Psoas muscle (tissue), 8 donors: ENCODE measurements at regions of chr19 and their contacts with region 1.

Region 1: GRCh38 chr19:55516878-55517620 is 19.9 kb downstream of the SBK2 start:
- DNase-seq: peak; percentile 94 to 97
- ATAC-seq: peak; percentile 80 to 91 (median 84)
- H3K4me3 ChIP-seq: peak overlapping the region; percentile 71
- H3K27ac ChIP-seq: peak overlapping the region; percentile 95
- H3K4me1 ChIP-seq: peaks cover 15% of the 10 kb centered on the region
- H3K27me3 ChIP-seq: no peaks in the 10 kb centered on the region
- CTCF ChIP-seq: peak; percentile 78

Region 2: GRCh38 chr19:55549500-55550320 is 32.7 kb after region 1 on chr19:
- intact Hi-C with region 1: no loop called
- DNase-seq: peak; percentile 58 to 91
- ATAC-seq: peak; percentile 41 to 64 (median 54)
- H3K4me3 ChIP-seq: peak overlapping the region; percentile 56
- H3K27ac ChIP-seq: peak overlapping the region; percentile 94
- H3K4me1 ChIP-seq: peaks cover 66% of the 10 kb centered on the region
- H3K27me3 ChIP-seq: no peaks in the 10 kb centered on the region
- CTCF ChIP-seq: peak; percentile 7

Region 3: DNA sequence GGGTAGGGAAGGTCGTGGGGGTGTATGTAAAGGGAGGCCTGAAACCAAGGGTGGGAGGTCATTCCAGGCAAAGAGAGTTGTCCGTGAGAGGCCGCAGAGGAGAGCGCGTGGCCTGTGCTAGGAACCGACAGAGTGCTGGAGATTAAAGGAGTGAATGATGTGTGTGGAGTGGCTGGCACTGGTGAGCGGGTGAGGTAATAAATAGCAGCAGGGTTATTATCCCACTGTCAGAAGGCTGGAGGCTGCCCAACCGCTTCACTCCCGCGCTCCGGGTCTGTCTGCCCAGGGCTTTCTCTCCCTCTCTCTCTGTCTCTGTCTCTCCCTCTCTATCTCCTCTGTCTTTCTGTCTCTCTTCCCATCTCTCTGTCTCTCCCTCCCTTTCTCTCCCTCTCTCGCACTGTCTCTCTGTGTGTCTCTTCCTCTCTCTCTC is 46.2 kb after region 1 on chr19:
- intact Hi-C with region 1: no loop called
- DNase-seq: peak; percentile 58 to 84
- ATAC-seq: peak; percentile 93 to 98 (median 98)
- H3K4me3 ChIP-seq: peak overlapping the region; percentile 28
- H3K27ac ChIP-seq: peak overlapping the region; percentile 83
- H3K4me1 ChIP-seq: no peaks in the 10 kb centered on the region
- H3K27me3 ChIP-seq: no peaks in the 10 kb centered on the region
- CTCF ChIP-seq: no peak

Region 4: DNA sequence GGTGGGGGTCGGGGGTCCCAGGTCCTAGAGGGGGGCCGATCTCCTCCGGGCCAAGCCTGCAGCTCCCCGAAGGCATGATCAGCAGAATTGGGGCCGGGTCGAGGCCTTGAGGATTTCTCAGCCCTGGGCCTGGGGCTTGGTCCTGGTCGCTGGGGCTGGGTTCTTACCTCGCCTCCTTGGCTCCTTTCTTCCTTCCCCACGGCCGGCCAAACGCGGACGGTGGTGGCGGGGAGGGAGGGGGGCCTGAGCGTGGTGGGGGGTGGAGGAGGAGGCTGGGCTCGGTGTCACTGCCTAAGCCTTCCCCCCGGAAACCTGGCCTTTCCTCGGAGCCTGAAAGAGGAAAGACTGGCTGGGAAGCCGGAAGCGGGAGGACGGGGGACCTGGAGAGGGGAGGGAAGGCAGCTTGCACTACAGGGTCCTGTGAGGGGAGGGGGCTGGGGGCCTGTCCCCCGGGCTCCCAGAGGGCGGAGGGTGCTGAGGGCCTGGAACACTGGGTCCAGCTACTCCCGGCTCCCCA is 63.6 kb after region 1 on chr19 and contains the start of gene ZNF579:
- intact Hi-C with region 1: loop called in 1 of 2 experiments (anchors 2 kb)
- DNase-seq: peak; percentile 89 to 95
- ATAC-seq: peak; percentile 82 to 92 (median 90)
- H3K4me3 ChIP-seq: peak within 1 kb of the TSS; percentile 93
- H3K27ac ChIP-seq: peak within 1 kb of the TSS; percentile 97
- H3K4me1 ChIP-seq: peaks cover 3% of the 10 kb centered on the region
- H3K27me3 ChIP-seq: peaks cover 0 to 5% (median 0%) of the 10 kb centered on the region in 3 donors
- CTCF ChIP-seq: no peak
- total RNA-seq, gene ZNF579: 21.8 to 81.6 (median 29.5) TPM

Region 5: DNA sequence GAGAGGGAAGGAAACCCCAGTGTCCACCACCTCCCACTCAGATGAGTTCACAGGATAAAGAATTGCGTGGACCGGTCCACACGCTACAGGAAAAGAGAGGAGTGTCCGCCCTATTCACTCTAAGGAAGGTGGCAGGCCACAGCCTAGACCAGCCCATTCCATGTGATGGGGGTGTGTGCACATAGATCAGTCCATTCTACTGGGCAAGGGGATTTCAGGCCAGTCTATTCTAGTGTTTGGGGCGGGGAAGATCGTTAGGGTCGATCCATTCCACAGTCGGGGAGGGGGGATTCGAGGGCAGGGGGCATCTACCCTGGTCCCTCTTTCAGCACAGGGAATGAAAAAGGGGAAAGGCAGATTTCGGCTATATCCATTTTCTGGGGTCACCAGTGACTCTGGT is 74.5 kb after region 1 on chr19:
- intact Hi-C with region 1: no loop called
- DNase-seq: peak in 1 of 2 donors; percentile 18
- ATAC-seq: no peak
- H3K4me3 ChIP-seq: no peak overlapping the region
- H3K27ac ChIP-seq: no peak overlapping the region
- H3K4me1 ChIP-seq: peaks cover 21% of the 10 kb centered on the region
- H3K27me3 ChIP-seq: no peaks in the 10 kb centered on the region
- CTCF ChIP-seq: no peak

Region 6: DNA sequence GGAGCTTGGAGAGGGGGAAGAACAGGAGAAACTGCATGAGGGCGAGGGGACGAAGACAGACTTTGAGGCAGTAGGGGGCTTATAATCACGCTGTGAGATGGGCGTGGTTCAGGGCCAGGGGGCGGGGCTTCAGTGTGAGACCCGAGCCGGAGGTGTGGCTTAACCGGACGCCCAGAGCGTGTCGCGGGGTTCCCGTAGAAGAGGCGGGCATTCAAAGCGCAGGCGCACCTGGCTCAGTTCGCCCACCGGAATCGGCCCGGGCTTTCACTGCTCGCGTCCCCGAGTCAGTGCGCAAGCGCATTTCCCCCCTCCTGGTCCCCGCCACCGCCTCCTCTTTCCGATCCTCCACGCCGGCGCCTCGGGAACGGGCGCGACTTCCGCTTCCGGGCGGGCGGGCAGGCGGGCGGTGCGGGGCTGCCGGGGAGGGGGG is 88.2 kb after region 1 on chr19:
- intact Hi-C with region 1: loop called (anchors 1 to 5 kb)
- DNase-seq: peak; percentile 98 to 99
- ATAC-seq: peak; percentile 82 to 86 (median 85)
- H3K4me3 ChIP-seq: peak overlapping the region; percentile 81
- H3K27ac ChIP-seq: peak overlapping the region; percentile 96
- H3K4me1 ChIP-seq: peaks cover 39% of the 10 kb centered on the region
- H3K27me3 ChIP-seq: no peaks in the 10 kb centered on the region
- CTCF ChIP-seq: no peak

Region 7: DNA sequence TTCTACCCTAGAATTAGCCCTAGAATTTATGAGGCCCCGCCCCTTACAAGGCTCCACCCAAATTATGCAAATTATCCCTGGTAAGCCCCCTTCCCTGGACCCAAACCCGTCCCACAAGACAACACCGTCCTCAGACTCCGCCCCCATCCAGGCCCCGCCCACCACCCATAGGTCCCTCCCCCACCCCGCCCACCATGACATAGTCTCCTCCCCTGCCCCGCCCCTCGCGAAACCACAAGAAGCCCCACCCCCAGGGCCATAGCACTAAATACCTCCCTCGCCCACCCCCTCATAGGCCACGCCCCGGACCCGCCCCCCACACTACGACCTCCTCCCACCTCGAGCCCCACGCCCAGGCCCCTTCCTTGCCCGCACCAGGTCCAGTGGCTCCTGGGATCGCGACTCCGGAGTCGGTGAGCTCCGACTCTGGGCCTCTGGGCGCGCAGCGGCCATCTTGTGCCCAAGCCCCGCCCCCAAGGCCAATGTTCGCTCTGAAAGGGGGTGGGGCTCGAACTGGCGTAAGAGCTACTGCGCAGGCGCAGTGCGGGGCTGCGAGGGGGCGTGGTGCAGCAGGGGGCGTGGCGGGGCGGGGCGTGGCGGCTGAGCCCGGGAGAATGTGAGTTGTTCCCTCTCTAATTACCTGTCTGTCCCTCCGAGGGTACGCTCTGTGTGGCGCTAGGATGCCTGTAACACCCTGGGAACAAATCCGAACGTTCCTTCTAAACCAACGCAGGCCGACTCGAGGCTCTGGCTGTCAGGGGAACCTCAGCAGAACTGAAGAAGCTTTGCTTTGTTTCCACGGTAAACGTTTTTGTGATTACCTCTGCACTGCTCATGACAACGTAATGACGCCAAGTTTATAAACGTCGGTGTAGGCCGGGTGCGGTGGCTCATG is 107.3 kb after region 1 on chr19 and contains the start of gene ZNF784:
- intact Hi-C with region 1: loop called in 1 of 2 experiments (anchors 2 kb)
- DNase-seq: peak; percentile 93 to 97
- ATAC-seq: peak; percentile 84 to 90 (median 88)
- H3K4me3 ChIP-seq: peak within 1 kb of the TSS; percentile 65
- H3K27ac ChIP-seq: peak within 1 kb of the TSS; percentile 90
- H3K4me1 ChIP-seq: peaks cover 37% of the 10 kb centered on the region
- H3K27me3 ChIP-seq: no peaks in the 10 kb centered on the region
- CTCF ChIP-seq: no peak
- total RNA-seq, gene ZNF784: 9.0 to 22.2 (median 11.4) TPM

Region 8: DNA sequence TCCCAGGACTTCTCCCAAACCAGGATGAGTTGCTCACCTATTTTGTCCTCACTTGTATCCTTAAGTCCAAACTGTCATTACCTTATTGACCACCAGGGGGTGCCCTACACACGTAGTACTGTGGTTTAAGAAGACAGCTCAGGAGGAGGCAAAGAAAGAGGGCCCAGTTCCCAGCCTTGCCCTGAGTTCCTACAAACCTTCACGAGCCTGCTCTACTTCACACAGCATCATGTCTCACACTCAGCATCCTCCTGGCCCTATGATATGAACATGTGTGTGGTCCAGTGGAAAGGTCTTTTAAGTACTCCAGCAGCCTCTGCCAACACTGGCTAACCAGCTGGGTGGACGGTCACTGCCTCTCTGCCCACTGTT is 115.4 kb after region 1 on chr19:
- intact Hi-C with region 1: loop called (anchors 2 to 5 kb)
- DNase-seq: peak; percentile 63 to 73
- ATAC-seq: peak; percentile 75 to 78 (median 76)
- H3K4me3 ChIP-seq: no peak overlapping the region
- H3K27ac ChIP-seq: peak overlapping the region; percentile 99
- H3K4me1 ChIP-seq: peaks cover 20% of the 10 kb centered on the region
- H3K27me3 ChIP-seq: no peaks in the 10 kb centered on the region
- CTCF ChIP-seq: peak; percentile 91